CD8-positive, alpha-beta T cell (primary cell): ENCODE measurements at regions of chr19 and their contacts with region 1.

Region 1: GRCh38 chr19:53103198-53103944 is at the start of gene ZNF160:
- DNase-seq: peak; percentile 99 to 100 (median 99)
- ATAC-seq: peak; percentile 95
- H3K4me3 ChIP-seq: peak within 1 kb of the TSS; percentile 72 to 83
- H3K4me3 Mint-ChIP-seq: peak within 1 kb of the TSS; percentile 92
- H3K27ac ChIP-seq: peak within 1 kb of the TSS; percentile 89 to 90
- H3K27ac Mint-ChIP-seq: peak within 1 kb of the TSS; percentile 97
- H3K4me1 ChIP-seq: peaks cover 14% of the 10 kb centered on the region
- H3K4me1 Mint-ChIP-seq: peaks cover 37% of the 10 kb centered on the region
- H3K27me3 ChIP-seq: no peaks in the 10 kb centered on the region
- H3K27me3 Mint-ChIP-seq: no peaks in the 10 kb centered on the region
- CTCF ChIP-seq: no peak
- total RNA-seq, gene ZNF160: 50.8 to 53.3 TPM

Region 2: DNA sequence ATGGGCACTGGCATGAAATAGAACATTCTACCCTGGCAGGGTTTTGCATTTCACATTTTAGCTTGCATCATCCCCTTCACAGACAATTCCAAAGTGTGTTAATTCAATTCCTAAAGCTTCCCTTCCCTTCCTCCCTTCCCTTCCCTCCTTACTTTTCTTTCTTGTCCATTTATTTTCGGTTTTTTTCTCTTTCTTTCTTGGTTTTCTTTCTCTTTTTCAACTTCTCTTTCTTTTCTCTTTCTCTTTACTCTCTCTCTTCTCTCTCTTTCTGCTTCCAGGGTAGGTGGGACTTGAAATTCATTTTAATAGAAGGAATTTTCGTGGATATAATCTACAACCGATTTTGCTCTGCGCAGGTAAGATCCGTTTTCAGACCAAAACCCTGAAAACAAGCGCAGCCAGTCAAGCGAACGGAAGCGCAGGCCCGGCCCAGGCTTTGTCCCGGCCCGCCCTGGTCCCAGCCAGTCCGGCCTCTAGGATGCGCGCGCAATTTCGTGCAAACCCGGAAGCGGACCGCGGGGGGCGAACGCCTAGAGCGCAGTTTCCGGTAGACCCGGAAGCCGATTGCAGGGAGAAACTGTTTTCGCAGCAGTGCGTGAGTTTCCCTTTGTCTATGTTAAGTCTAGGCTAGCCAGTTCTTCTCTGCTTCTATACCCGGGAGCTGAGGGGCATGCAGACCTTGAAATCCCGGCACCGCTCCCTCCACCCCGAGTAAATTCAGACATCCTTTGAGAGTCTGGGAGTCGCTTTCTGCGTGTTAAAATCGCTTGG is 705.9 kb before region 1 on chr19 and contains the start of gene ZNF528:
- CTCF ChIA-PET with region 1: no interaction called
- POLR2A ChIA-PET with region 1: no interaction called
- intact Hi-C with region 1: loop called in 1 of 2 experiments (anchors 1 kb)
- DNase-seq: peak; percentile 81 to 98 (median 95)
- ATAC-seq: peak; percentile 98
- H3K4me3 ChIP-seq: peak within 1 kb of the TSS; percentile 77 to 81
- H3K4me3 Mint-ChIP-seq: peak within 1 kb of the TSS; percentile 88
- H3K27ac ChIP-seq: peak within 1 kb of the TSS; percentile 67 to 83
- H3K27ac Mint-ChIP-seq: peak within 1 kb of the TSS; percentile 93
- H3K4me1 ChIP-seq: peaks cover 13% of the 10 kb centered on the region
- H3K4me1 Mint-ChIP-seq: peaks cover 25% of the 10 kb centered on the region
- H3K27me3 ChIP-seq: no peaks in the 10 kb centered on the region
- H3K27me3 Mint-ChIP-seq: no peaks in the 10 kb centered on the region
- CTCF ChIP-seq: no peak
- total RNA-seq, gene ZNF528: 12.2 to 15.3 TPM

Region 3: DNA sequence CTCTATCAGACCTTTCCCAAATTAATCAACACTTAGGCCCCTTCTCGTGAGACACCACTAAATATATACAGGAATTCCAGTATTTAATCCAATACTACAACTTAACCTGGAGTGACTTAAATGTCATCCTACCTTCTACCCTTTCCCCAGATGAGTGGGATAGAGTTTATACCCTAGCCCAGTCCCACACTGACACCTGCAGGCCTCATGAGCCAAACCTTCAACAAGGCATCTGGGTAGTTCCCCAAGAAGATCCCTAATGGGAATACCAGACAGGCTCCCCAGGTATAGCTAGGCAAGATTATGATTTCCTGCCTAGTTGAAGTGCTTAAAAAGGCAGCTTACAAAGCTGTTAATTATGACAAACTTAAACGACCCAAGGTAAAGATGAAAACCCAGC is 481.1 kb before region 1 on chr19:
- CTCF ChIA-PET with region 1: no interaction called
- POLR2A ChIA-PET with region 1: no interaction called
- intact Hi-C with region 1: no loop called
- DNase-seq: peak in 2 of 9 experiments; percentile 11 to 20
- ATAC-seq: no peak
- H3K4me3 ChIP-seq: no peak overlapping the region
- H3K4me3 Mint-ChIP-seq: peak overlapping the region; percentile 29
- H3K27ac ChIP-seq: no peak overlapping the region
- H3K27ac Mint-ChIP-seq: peak overlapping the region; percentile 29
- H3K4me1 ChIP-seq: no peaks in the 10 kb centered on the region
- H3K4me1 Mint-ChIP-seq: peaks cover 25% of the 10 kb centered on the region
- H3K27me3 ChIP-seq: no peaks in the 10 kb centered on the region
- H3K27me3 Mint-ChIP-seq: no peaks in the 10 kb centered on the region
- CTCF ChIP-seq: no peak

Region 4: DNA sequence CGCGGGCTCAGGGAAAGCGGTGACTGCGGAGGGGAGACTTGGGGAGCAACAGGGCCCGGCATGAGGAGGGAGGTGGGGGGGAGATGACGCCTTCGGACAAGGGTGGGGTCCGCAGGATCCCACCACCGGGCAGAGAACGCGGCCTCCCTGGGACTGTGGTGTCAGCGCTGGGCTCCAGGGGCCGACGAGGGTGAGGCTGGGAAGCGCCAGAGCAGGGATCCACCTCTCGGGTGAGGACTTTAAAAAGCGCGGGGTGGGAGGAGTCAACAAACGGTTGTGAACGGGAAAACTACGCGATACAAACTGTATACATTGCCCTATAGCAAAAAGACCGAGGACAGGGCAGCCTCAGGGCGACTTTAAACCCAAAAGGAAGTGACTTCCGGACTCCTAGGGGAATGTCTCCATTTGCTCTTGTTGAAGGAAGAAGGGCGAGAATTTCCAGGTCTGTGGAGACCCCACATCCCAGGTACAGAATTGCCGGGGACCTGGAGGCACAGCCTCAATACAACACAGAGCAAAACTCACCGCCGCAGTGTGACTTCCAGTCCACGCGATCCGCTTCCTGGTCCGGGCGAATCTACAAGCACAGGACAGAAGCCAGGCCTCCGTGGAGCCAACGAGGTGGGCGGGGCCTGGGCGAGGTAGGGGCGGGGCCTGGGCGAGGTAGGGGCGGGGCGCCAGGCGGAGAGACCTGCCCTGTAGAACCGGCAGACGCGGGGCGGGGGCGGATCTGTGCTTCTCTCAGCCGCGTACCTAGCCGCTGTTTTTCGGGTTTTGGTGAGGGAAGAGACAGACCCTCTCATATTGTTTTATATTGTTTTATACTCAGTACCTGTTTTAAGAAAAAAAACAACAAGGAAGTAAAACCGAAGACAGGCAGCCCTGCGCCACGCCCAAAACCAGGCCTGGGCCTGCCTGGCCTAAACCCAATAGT is 180.3 kb before region 1 on chr19 and contains the start of gene ZNF888:
- CTCF ChIA-PET with region 1: no interaction called
- POLR2A ChIA-PET with region 1: no interaction called
- intact Hi-C with region 1: loop called (anchors 1 to 2 kb)
- DNase-seq: peak; percentile 74 to 90 (median 82)
- ATAC-seq: peak; percentile 100
- H3K4me3 ChIP-seq: peak within 1 kb of the TSS; percentile 93 to 97
- H3K4me3 Mint-ChIP-seq: peak within 1 kb of the TSS; percentile 94
- H3K27ac ChIP-seq: peak within 1 kb of the TSS; percentile 62 to 75
- H3K27ac Mint-ChIP-seq: peak within 1 kb of the TSS; percentile 90
- H3K4me1 ChIP-seq: peaks cover 14% of the 10 kb centered on the region
- H3K4me1 Mint-ChIP-seq: peaks cover 33% of the 10 kb centered on the region
- H3K27me3 ChIP-seq: no peaks in the 10 kb centered on the region
- H3K27me3 Mint-ChIP-seq: no peaks in the 10 kb centered on the region
- CTCF ChIP-seq: no peak
- total RNA-seq, gene ZNF888: 4.5 to 4.9 TPM

Region 5: DNA sequence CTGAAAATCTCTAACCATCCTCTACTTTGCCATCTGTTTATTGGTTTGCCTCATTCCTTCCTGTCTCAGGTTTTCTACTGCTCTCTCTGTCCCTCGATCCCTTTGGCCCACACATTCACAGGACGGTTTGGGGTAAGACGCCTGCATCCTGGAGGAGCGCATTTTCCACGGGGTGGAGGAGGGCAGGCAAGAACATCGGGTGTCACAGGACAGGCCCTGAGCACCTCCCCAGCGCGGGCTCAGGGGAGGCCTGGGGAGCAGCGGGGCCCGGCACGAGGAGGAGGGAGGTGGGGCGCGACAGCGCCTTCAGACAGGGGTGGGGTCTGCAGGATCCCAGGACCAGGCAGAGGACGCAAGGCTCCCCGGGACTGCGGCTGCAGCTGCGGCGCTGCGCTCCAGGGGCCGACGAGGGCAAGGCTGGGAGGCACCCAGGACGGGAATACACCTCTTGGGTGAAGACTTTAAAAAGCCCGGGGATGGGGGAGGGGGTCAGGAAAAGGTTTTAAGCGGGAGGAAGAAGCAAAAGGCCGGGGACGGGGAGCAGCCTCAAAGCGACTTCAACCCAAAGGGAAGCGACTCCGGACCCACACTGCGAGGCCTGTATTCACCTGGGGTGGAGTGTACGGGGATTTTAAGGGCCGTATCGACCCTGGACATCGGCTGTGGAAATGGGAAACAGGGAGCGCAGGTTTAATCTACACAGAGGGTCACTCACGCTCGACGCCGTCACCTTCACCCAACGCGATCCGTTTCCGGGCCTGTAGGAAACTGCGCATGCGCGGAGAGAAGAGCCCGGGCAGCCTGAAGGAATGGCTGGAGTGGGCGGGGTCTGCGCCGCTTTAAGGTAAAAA is 29.0 kb after region 1 on chr19 and contains the start of gene ZNF415:
- CTCF ChIA-PET with region 1: no interaction called
- POLR2A ChIA-PET with region 1: no interaction called
- intact Hi-C with region 1: loop called (anchors 1 to 2 kb)
- DNase-seq: peak in 8 of 9 experiments; percentile 15 to 64 (median 46)
- ATAC-seq: peak; percentile 69
- H3K4me3 ChIP-seq: peak within 1 kb of the TSS; percentile 44
- H3K4me3 Mint-ChIP-seq: peak within 1 kb of the TSS; percentile 88
- H3K27ac ChIP-seq: peak within 1 kb of the TSS in 1 of 2 experiments; percentile 18
- H3K27ac Mint-ChIP-seq: peak within 1 kb of the TSS; percentile 78
- H3K4me1 ChIP-seq: no peaks in the 10 kb centered on the region
- H3K4me1 Mint-ChIP-seq: peaks cover 21% of the 10 kb centered on the region
- H3K27me3 ChIP-seq: peaks cover 0 to 8% of the 10 kb centered on the region in 2 experiments
- H3K27me3 Mint-ChIP-seq: peaks cover 7% of the 10 kb centered on the region
- CTCF ChIP-seq: no peak
- total RNA-seq, gene ZNF415: 1.1 to 1.2 TPM

Region 6: GRCh38 chr19:53333463-53334449 is 230.4 kb after region 1 on chr19 and contains the start of gene ZNF845:
- CTCF ChIA-PET with region 1: no interaction called
- POLR2A ChIA-PET with region 1: no interaction called
- intact Hi-C with region 1: loop called (anchors 1 kb)
- DNase-seq: peak; percentile 93 to 98 (median 96)
- ATAC-seq: peak; percentile 98
- H3K4me3 ChIP-seq: peak within 1 kb of the TSS; percentile 81 to 98
- H3K4me3 Mint-ChIP-seq: peak within 1 kb of the TSS; percentile 92
- H3K27ac ChIP-seq: peak within 1 kb of the TSS; percentile 66 to 83
- H3K27ac Mint-ChIP-seq: peak within 1 kb of the TSS; percentile 81
- H3K4me1 ChIP-seq: no peaks in the 10 kb centered on the region
- H3K4me1 Mint-ChIP-seq: peaks cover 31% of the 10 kb centered on the region
- H3K27me3 ChIP-seq: peaks cover 0 to 4% of the 10 kb centered on the region in 2 experiments
- H3K27me3 Mint-ChIP-seq: peaks cover 3% of the 10 kb centered on the region
- CTCF ChIP-seq: no peak
- total RNA-seq, gene ZNF845: 10.9 to 11.7 TPM

Region 7: DNA sequence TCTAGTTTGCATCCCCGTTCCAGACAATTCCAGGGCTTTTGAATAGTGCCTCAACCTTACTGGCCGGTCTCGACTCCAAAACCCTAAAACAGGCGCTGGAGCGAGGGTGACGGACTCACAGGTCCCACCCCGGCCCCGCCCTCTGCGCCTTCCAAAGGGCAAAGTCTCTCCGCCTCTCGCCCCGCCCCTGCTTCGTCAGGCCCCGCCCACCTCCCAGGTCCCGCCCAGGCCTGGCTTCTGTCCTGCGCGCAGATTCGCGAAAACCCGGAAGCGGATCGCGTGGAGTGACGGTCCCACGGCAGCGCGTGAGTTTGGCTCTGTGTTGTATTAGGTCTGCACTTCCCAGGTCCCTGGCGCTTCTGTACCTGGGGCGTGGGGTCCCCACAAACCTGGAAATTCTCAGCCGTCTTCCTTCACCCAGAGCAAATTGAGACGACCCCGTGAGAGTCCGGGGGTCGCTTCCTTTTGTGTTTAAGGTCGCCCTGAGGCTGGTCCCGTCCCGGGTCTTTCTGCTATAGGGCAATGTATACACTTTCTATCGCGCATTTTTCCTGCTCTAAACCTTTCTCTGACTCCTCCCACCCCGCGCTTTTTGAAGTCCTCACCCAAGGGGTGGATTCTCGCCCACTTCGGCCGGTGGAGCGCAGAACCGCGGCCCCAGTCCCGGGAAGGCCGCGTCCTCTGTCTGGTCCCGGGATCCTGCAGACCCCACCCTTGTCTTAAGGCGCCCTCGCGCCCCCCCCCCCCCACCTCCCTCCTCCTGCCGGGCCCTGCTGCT is 364.3 kb after region 1 on chr19 and contains the start of gene ZNF813:
- CTCF ChIA-PET with region 1: no interaction called
- POLR2A ChIA-PET with region 1: no interaction called
- intact Hi-C with region 1: loop called (anchors 1 kb)
- DNase-seq: peak; percentile 93 to 98 (median 95)
- ATAC-seq: peak; percentile 98
- H3K4me3 ChIP-seq: peak within 1 kb of the TSS; percentile 73 to 91
- H3K4me3 Mint-ChIP-seq: peak within 1 kb of the TSS; percentile 92
- H3K27ac ChIP-seq: peak within 1 kb of the TSS; percentile 64 to 79
- H3K27ac Mint-ChIP-seq: peak within 1 kb of the TSS; percentile 89
- H3K4me1 ChIP-seq: peaks cover 7% of the 10 kb centered on the region
- H3K4me1 Mint-ChIP-seq: peaks cover 26% of the 10 kb centered on the region
- H3K27me3 ChIP-seq: no peaks in the 10 kb centered on the region
- H3K27me3 Mint-ChIP-seq: peaks cover 18% of the 10 kb centered on the region
- CTCF ChIP-seq: no peak
- total RNA-seq, gene ZNF813: 3.8 TPM